Endothelial cell of umbilical vein (primary cell): ENCODE measurements at regions of chr11 and their contacts with region 1.

Region 1: DNA sequence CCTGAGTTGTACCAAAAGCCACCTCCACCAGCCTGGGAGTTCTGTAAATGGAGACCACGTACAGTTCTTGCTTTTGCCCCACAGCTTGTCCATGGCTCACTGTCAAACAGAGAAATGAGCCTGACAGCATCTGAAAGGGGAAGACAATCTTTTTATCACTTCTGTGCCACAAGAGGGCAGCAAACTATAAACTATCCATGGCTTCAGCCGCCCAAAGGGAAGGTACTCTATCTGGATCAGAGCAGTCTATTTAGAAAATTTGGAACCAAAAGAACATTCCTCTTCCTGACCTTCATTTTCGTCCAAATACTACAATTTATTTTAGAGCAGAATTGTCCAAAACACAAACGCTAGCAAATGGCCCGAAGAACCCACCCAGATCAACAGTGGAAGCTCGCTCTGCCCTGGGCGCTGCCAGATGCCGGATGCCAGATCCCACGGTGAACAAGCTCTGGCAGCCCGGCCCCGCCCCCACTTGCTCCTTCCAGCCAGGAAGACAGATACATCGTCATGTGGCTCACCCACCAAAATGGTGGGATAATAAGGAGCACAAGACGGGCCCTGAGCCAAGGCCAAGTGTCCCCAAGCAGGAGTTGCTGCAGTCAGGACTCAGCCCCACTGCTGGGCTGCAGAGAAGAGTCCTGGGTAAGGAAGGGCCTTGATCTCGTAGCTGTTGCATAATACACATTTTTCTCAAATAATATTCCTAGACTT is 23.9 kb upstream of the SCGB1A1 start:
- DNase-seq: peak; percentile 86
- H3K4me3 ChIP-seq: peak overlapping the region; percentile 20 to 71 (median 38)
- H3K27ac ChIP-seq: peak overlapping the region; percentile 15
- H3K4me1 ChIP-seq: peaks cover 4% of the 10 kb centered on the region
- H3K27me3 ChIP-seq: no peaks in the 10 kb centered on the region
- CTCF ChIP-seq: peak; percentile 47 to 56
- POLR2A ChIP-seq: no peak

Region 2: GRCh38 chr11:62193952-62194351 is 201.0 kb before region 1 on chr11:
- CTCF ChIA-PET with region 1: no interaction called
- POLR2A ChIA-PET with region 1: no interaction called
- dilution Hi-C with region 1: no loop called
- intact Hi-C with region 1: no loop called
- DNase-seq: no peak
- H3K4me3 ChIP-seq: no peak overlapping the region
- H3K27ac ChIP-seq: no peak overlapping the region
- H3K4me1 ChIP-seq: no peaks in the 10 kb centered on the region
- H3K27me3 ChIP-seq: peaks cover 13 to 20% of the 10 kb centered on the region in 2 experiments
- CTCF ChIP-seq: no peak
- POLR2A ChIP-seq: no peak

Region 3: GRCh38 chr11:62324738-62325556 is 70.0 kb before region 1 on chr11:
- CTCF ChIA-PET with region 1: no interaction called
- POLR2A ChIA-PET with region 1: no interaction called
- dilution Hi-C with region 1: no loop called
- intact Hi-C with region 1: no loop called
- DNase-seq: peak; percentile 45
- H3K4me3 ChIP-seq: no peak overlapping the region
- H3K27ac ChIP-seq: no peak overlapping the region
- H3K4me1 ChIP-seq: no peaks in the 10 kb centered on the region
- H3K27me3 ChIP-seq: peaks cover 0 to 5% of the 10 kb centered on the region in 2 experiments
- CTCF ChIP-seq: peak; percentile 79 to 82
- POLR2A ChIP-seq: no peak

Region 4: DNA sequence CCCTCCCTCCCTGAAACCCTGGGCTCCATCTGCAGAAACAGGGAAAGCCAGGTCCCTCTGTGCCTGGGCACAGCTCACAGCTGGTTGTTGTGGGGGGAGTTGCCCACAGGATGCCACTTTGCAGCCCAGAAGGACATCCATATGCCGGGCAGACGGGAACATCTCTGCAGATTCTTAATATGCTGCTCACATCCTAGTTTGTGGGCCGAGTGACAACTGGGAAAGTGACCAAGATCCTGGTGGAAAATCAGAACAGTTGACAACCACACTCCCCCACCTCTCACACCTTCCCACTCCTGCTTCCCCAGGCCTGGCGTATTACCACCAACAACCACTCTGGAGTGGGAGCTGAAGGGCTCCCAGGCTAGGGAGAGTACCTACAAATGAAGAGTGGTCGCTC is 16.5 kb after region 1 on chr11:
- CTCF ChIA-PET with region 1: interaction called, 11 read pairs
- POLR2A ChIA-PET with region 1: interaction called, 5 read pairs
- dilution Hi-C with region 1: no loop called
- intact Hi-C with region 1: no loop called
- DNase-seq: no peak
- H3K4me3 ChIP-seq: no peak overlapping the region
- H3K27ac ChIP-seq: no peak overlapping the region
- H3K4me1 ChIP-seq: no peaks in the 10 kb centered on the region
- H3K27me3 ChIP-seq: no peaks in the 10 kb centered on the region
- CTCF ChIP-seq: no peak
- POLR2A ChIP-seq: no peak

Region 5: GRCh38 chr11:62556108-62556871 is 161.3 kb after region 1 on chr11:
- CTCF ChIA-PET with region 1: interaction called, 97 read pairs
- POLR2A ChIA-PET with region 1: interaction called, 4 read pairs
- dilution Hi-C with region 1: no loop called
- intact Hi-C with region 1: loop called (anchors 1 kb)
- DNase-seq: peak; percentile 94
- H3K4me3 ChIP-seq: peak overlapping the region in 1 of 3 experiments; percentile 6
- H3K27ac ChIP-seq: peak overlapping the region; percentile 56
- H3K4me1 ChIP-seq: peaks cover 75% of the 10 kb centered on the region
- H3K27me3 ChIP-seq: no peaks in the 10 kb centered on the region
- CTCF ChIP-seq: no peak
- POLR2A ChIP-seq: peak; percentile 80

Region 6: DNA sequence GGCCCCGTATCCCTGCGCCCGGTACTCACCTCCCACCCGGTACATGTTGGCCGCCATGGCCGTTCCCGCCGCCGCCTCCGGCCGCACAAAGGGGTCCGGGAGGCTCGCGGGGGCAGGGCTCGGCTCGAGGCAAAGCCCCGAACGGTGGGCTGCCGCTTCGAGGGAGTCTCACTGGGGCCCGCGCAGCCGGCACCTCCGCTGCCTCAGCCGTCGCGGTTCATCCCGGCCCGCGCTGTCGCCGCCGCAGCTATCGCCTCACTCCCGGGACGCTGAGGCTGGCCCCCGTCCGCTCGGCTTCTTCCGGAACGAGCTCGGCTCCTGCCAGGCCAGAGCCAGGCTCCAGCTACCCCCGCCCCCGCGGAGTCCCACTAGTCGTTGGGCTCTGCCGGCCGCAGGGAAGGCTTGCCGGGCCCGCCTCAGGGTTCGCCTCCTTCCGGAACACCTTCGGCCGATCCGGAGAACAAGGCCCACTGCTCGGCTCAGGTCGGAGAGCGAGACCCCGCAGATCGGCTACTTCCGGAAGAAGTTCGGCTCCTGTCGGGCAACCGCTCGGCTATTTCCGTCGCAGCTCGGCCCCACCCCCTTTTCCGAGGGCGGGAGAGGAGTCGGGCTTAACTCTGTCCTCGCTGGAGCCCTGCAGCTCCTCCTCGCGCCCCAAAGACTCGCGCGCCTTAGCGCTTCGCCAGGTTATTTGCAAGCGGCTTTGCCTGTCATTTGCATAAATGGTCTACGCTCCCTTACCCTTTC is 206.6 kb after region 1 on chr11 and contains the start of gene MTA2:
- CTCF ChIA-PET with region 1: interaction called, 13 read pairs
- POLR2A ChIA-PET with region 1: no interaction called
- dilution Hi-C with region 1: no loop called
- intact Hi-C with region 1: no loop called
- DNase-seq: peak; percentile 99
- H3K4me3 ChIP-seq: peak within 1 kb of the TSS; percentile 61 to 98 (median 92)
- H3K27ac ChIP-seq: peak within 1 kb of the TSS; percentile 54
- H3K4me1 ChIP-seq: peaks cover 19% of the 10 kb centered on the region
- H3K27me3 ChIP-seq: no peaks in the 10 kb centered on the region
- CTCF ChIP-seq: no peak
- POLR2A ChIP-seq: peak; percentile 75
- total RNA-seq, gene MTA2: 166 and 176 TPM in 2 replicates

Region 7: DNA sequence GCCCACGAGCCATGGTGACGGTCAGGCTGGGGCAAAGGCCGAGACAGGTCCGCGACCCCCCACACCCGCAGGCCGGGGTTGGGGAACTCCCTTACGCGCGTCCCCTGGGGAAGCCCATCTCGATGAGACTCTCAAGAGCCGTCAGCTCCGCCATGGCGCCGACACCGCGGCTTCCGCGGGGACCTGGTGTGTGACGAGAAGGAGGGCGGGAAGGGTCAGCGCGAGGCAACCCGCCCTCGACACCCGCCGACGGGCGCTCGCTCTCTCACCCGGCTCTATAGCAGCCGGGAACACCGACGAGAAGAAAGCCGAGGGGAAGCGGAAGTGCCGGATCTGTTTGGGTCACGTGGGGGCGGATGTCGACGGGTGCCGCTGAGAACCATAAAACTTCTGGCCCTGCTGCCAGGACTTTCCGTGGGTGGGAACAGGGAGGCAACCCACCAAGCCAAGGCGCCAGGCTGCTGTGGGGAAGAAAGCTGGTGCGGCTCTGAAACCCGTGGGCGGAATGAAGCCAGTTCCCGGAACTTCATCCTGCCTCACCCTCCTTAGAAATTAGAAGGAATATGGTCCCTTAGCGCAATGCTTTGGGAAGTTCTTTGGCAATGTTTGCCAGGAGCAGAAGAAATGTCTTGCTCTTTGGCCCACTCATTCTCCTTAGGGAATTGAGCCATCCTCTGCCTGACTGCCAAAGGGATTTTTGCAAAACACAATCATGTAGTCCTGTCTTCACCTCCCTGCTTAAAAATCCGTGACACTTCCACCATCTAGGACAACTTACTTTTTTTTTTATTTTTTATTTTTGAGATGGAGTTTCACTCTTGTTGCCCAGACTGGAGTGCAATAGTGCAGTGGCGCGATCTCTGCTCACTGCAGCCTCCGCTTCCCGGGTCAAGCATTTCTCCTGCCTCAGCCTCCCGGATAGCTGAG is 284.1 kb after region 1 on chr11 and contains the start of gene UBXN1:
- CTCF ChIA-PET with region 1: interaction called, 13 read pairs
- POLR2A ChIA-PET with region 1: no interaction called
- dilution Hi-C with region 1: no loop called
- intact Hi-C with region 1: no loop called
- DNase-seq: peak; percentile 89
- H3K4me3 ChIP-seq: peak within 1 kb of the TSS; percentile 76 to 93 (median 79)
- H3K27ac ChIP-seq: peak within 1 kb of the TSS; percentile 74
- H3K4me1 ChIP-seq: peaks cover 11% of the 10 kb centered on the region
- H3K27me3 ChIP-seq: no peaks in the 10 kb centered on the region
- CTCF ChIP-seq: no peak
- POLR2A ChIP-seq: peak; percentile 84
- total RNA-seq, gene UBXN1: 112 and 113 TPM in 2 replicates

Region 8: DNA sequence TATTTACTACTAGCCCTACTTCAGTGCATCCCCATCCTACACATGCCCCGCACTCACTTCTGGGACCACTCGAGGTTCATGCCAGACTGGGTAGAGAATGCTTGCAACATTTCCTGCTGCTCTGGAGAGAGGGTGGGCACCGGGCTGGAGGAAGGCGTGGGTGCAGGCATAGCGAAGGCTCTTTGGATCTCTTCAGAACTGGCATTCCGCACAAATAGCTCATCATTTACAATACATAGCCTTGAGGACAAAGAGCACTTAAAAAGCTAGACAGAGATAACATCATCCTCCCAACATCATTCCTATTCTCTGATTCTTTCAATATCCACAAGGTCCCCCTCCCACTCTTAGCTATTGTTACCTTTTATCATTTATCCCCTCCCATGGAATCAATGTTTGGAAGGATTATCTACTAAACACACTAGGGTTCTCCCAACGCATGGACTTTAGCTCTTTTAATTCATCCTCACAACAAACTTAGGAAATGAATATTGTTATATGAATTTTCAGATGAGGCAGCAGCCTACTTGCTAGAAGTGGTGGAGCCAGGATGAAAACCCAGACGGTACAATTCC is 399.3 kb after region 1 on chr11:
- CTCF ChIA-PET with region 1: no interaction called
- POLR2A ChIA-PET with region 1: no interaction called
- dilution Hi-C with region 1: no loop called
- intact Hi-C with region 1: no loop called
- DNase-seq: no peak
- H3K4me3 ChIP-seq: no peak overlapping the region
- H3K27ac ChIP-seq: no peak overlapping the region
- H3K4me1 ChIP-seq: peaks cover 11% of the 10 kb centered on the region
- H3K27me3 ChIP-seq: no peaks in the 10 kb centered on the region
- CTCF ChIP-seq: no peak
- POLR2A ChIP-seq: no peak

Region 9: DNA sequence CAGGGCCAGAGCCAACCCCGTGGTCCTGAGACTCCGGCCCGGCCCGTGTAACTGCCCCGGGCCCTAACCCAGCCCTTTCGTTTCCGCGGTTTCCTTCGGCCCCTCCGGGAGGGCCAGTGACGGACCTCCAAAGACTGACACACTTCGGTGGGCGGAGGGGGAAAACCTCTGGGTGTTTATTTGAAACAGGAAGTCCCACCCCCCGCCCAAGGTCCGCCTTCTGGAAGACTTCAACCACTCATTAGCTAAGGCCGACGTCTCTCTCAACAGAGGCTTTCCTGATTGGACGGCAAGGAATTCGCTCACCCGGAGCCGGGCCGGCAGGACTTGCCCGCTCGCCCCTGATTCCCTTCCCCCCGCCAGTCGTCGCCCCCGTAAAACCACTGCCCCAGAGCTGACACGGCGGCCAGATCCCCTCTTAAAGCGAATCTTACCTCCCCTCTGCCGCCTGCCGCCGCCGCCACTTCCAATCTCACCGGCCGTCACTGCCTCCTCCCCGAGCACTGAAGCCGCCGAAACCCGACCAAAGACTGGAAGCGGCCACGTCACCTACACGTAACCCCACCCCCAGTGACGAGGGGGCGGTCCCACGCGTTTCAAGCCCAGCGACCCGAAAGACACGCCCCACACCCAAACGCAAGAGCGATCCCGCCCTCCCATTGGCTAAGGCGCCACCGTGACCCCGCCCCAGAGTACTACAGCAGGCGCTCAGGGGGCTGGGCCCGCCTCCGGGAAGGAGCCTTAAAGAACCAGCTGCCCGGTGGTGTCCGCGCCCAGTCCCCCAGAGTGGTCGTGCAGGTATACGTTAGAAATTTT is 436.7 kb after region 1 on chr11 and contains the start of gene STX5:
- CTCF ChIA-PET with region 1: no interaction called
- POLR2A ChIA-PET with region 1: no interaction called
- dilution Hi-C with region 1: no loop called
- intact Hi-C with region 1: loop called (anchors 5 kb)
- DNase-seq: peak; percentile 99
- H3K4me3 ChIP-seq: peak within 1 kb of the TSS; percentile 62 to 82 (median 75)
- H3K27ac ChIP-seq: peak within 1 kb of the TSS; percentile 76
- H3K4me1 ChIP-seq: peaks cover 13% of the 10 kb centered on the region
- H3K27me3 ChIP-seq: no peaks in the 10 kb centered on the region
- CTCF ChIP-seq: no peak
- POLR2A ChIP-seq: peak; percentile 97
- total RNA-seq, gene STX5: 41.3 and 42.8 TPM in 2 replicates